ENCODE measurements at regions of chr13 and their contacts with region 1.

Region 1: GRCh38 chr13:33723772-33724435 is 94.0 kb upstream of the RFC3 start:
- DNase-seq: peak; percentile 51 to 94 (median 77)

Region 2: GRCh38 chr13:33542283-33543088 is 181.4 kb before region 1 on chr13:
- intact Hi-C with region 1: loop called (anchors 2 kb)
- DNase-seq: peak; percentile 94 to 99 (median 96)

Region 3: GRCh38 chr13:33610471-33611015 is 113.4 kb before region 1 on chr13:
- intact Hi-C with region 1: loop called (anchors 2 kb)
- DNase-seq: peak; percentile 59 to 96 (median 76)